ENCODE measurements at regions of chr6 and their contacts with region 1.

Region 1: DNA sequence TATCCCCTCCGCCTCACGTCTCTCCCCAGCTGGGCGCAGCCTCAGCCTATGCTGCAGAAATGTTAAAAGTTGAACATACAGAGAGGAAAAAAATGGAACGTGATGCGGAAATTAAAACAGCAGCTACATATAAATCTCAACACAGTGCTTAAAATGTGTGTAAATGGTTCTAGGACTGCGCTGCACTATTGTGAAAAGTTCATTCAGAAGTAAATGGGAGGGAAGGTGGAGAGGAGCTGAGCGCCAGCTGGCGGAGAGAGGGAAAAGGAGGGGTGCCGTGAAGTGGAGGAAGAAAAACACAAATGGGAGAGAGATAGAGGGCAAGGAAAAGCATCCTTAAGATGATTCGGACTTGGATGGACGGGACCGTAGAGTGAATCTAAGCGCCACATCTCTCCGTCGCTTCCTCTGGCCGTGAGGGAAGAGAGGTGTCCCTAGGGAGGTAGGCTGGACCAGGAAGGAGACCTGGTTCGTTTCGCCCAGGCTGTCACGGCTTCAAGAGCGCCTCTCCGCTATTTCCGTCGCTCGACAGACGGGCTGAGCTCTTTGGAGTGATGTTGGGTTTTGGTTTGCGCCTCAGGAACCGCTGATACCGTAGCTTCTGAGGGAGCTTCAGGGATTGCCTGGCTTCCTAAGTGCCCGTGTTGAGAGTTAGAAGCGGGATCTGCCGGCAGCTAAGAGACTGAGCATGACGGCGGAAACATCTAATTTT is 113.7 kb downstream of the TRIM27 start:
- DNase-seq: no peak
- ATAC-seq: no peak
- H3K4me3 ChIP-seq: no peak overlapping the region
- H3K4me3 Mint-ChIP-seq: peak overlapping the region in 6 of 10 donors; percentile 4 to 57 (median 22)
- H3K27ac ChIP-seq: no peak overlapping the region
- H3K27ac Mint-ChIP-seq: peak overlapping the region in 4 of 9 donors; percentile 38 to 70 (median 62)
- H3K4me1 ChIP-seq: no peaks in the 10 kb centered on the region
- H3K4me1 Mint-ChIP-seq: peaks cover 0 to 31% (median 13%) of the 10 kb centered on the region in 7 donors
- H3K27me3 ChIP-seq: peaks cover 33 to 47% of the 10 kb centered on the region in 2 donors
- H3K27me3 Mint-ChIP-seq: peaks cover 87 to 95% (median 92%) of the 10 kb centered on the region in 5 donors

Region 2: DNA sequence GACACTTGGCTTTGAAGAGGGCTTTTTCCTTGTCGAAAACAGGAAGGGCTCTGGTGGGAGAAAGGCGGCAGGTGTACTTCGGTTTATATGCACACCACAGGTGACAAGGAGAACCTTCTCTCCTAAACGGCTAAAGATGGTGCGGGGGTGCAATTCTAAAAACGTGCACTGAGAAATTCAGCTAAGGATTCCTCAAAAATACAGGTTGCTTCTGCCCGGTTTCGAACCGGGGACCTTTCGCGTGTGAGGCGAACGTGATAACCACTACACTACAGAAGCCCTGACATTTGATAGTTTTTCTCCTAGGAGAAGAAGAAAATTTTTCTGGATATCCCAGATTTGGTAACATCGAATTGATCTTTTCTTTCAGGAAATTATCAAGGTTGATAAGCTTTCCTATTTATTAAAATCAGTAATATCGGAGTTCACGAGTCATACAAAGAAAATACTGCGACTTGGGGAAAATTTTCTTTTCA is 1530.0 kb before region 1 on chr6:
- CTCF ChIA-PET with region 1: no interaction called
- POLR2A ChIA-PET with region 1: no interaction called
- intact Hi-C with region 1: no loop called
- DNase-seq: peak in 1 of 9 donors; percentile 13
- ATAC-seq: no peak
- H3K4me3 ChIP-seq: no peak overlapping the region
- H3K4me3 Mint-ChIP-seq: peak overlapping the region in 5 of 10 donors; percentile 28 to 51 (median 44)
- H3K27ac ChIP-seq: no peak overlapping the region
- H3K27ac Mint-ChIP-seq: peak overlapping the region in 5 of 9 donors; percentile 59 to 83 (median 77)
- H3K4me1 ChIP-seq: no peaks in the 10 kb centered on the region
- H3K4me1 Mint-ChIP-seq: peaks cover 0 to 19% (median 4%) of the 10 kb centered on the region in 7 donors
- H3K27me3 ChIP-seq: peaks cover 32 to 52% of the 10 kb centered on the region in 2 donors
- H3K27me3 Mint-ChIP-seq: peaks cover 74 to 88% (median 86%) of the 10 kb centered on the region in 5 donors

Region 3: DNA sequence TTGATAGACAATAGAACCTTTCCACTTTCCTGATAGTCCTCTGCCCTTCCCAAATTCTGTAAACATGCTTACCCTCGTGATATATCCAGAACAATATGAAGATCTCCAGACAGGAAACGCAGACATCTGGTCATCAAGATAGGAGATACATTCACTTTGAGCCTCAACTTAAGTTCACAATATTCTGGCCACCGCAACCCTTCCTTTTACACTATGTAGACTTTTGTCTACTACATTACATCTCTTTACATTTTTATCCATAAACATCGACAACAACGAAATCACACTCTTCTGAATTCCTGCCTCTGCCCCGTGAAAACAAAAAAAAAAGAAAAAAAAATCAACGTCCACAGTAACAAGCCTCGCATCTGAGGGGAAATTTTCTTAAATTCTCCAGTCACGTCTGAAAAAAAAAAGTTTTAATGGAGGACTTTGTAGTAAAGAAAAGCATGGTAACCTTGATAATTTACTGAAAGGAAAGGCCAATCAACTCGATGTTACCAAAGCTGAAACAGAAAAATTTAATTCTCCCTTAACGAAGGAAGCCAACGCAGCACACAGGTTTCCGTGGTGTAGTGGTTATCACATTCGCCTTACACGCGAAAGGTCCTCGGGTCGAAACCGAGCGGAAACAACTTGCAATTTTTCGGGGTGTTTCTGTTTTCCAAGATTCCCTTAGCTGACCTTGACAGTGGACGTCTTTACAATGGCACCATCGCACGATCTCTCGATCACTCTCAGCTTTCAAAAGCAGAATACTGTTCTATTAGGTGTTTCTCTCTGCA is 1519.8 kb before region 1 on chr6:
- CTCF ChIA-PET with region 1: no interaction called
- POLR2A ChIA-PET with region 1: no interaction called
- intact Hi-C with region 1: loop called (anchors 2 to 10 kb)
- DNase-seq: no peak
- ATAC-seq: no peak
- H3K4me3 ChIP-seq: no peak overlapping the region
- H3K4me3 Mint-ChIP-seq: peak overlapping the region in 4 of 10 donors; percentile 5 to 64 (median 10)
- H3K27ac ChIP-seq: no peak overlapping the region
- H3K27ac Mint-ChIP-seq: peak overlapping the region in 6 of 9 donors; percentile 18 to 67 (median 29)
- H3K4me1 ChIP-seq: no peaks in the 10 kb centered on the region
- H3K4me1 Mint-ChIP-seq: peaks cover 0 to 4% (median 0%) of the 10 kb centered on the region in 7 donors
- H3K27me3 ChIP-seq: peaks cover 37 to 70% of the 10 kb centered on the region in 2 donors
- H3K27me3 Mint-ChIP-seq: peaks cover 86 to 95% (median 90%) of the 10 kb centered on the region in 5 donors

Region 4: GRCh38 chr6:28695715-28696114 is 114.4 kb before region 1 on chr6:
- CTCF ChIA-PET with region 1: no interaction called
- POLR2A ChIA-PET with region 1: no interaction called
- intact Hi-C with region 1: loop called in 1 of 2 experiments (anchors 5 kb)
- DNase-seq: no peak
- ATAC-seq: no peak
- H3K4me3 ChIP-seq: no peak overlapping the region
- H3K4me3 Mint-ChIP-seq: peak overlapping the region in 5 of 10 donors; percentile 5 to 67 (median 39)
- H3K27ac ChIP-seq: no peak overlapping the region
- H3K27ac Mint-ChIP-seq: peak overlapping the region in 1 of 9 donors; percentile 13
- H3K4me1 ChIP-seq: no peaks in the 10 kb centered on the region
- H3K4me1 Mint-ChIP-seq: peaks cover 6 to 32% (median 24%) of the 10 kb centered on the region in 7 donors
- H3K27me3 ChIP-seq: peaks cover 11 to 19% of the 10 kb centered on the region in 2 donors
- H3K27me3 Mint-ChIP-seq: peaks cover 86 to 95% (median 93%) of the 10 kb centered on the region in 5 donors

Region 5: GRCh38 chr6:28719275-28719940 is 90.7 kb before region 1 on chr6:
- CTCF ChIA-PET with region 1: no interaction called
- POLR2A ChIA-PET with region 1: no interaction called
- intact Hi-C with region 1: no loop called
- DNase-seq: no peak
- ATAC-seq: no peak
- H3K4me3 ChIP-seq: no peak overlapping the region
- H3K4me3 Mint-ChIP-seq: no peak overlapping the region
- H3K27ac ChIP-seq: no peak overlapping the region
- H3K27ac Mint-ChIP-seq: no peak overlapping the region
- H3K4me1 ChIP-seq: no peaks in the 10 kb centered on the region
- H3K4me1 Mint-ChIP-seq: no peaks in the 10 kb centered on the region
- H3K27me3 ChIP-seq: no peaks in the 10 kb centered on the region
- H3K27me3 Mint-ChIP-seq: peaks cover 44 to 89% (median 82%) of the 10 kb centered on the region in 5 donors

Region 6: DNA sequence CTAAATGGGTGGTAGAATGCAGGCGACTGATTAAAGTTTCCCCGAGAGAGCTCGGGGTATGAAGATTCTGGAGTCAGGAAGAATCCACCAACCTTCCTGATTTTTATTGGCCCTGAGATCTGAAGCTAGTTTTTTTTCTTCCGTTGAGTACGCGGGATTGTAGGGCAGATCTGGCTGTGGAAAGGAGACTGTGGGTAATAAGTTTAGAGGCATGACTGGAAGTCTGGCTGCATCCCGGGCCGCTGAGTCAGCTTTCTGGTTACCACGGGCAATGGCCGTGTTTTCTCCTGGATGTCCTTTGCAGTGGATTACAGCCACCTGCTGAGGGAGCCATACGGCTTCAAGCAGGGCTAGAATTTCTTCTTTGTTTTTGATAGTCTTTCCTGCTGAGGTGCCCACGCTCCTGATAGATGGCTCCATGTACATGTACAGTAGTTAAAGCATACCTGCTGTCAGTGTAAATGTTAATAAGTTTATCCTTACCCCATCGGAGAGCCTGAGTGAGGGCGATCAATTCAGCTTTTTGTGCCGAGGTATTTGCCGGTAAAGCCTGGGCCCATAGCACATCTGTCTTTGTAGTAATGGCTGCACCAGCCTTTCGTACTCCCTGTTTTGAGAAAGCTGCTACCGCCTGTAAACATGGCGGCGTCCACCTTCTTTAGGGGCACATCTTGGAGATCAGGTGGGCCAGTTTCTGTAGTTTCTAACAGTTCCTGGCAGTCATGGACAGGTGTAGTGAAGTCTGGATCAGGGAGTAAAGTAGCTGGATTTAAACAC is 40.3 kb before region 1 on chr6:
- CTCF ChIA-PET with region 1: no interaction called
- POLR2A ChIA-PET with region 1: no interaction called
- intact Hi-C with region 1: loop called (anchors 5 kb)
- DNase-seq: no peak
- ATAC-seq: no peak
- H3K4me3 ChIP-seq: no peak overlapping the region
- H3K4me3 Mint-ChIP-seq: no peak overlapping the region
- H3K27ac ChIP-seq: no peak overlapping the region
- H3K27ac Mint-ChIP-seq: peak overlapping the region in 1 of 9 donors; percentile 33
- H3K4me1 ChIP-seq: no peaks in the 10 kb centered on the region
- H3K4me1 Mint-ChIP-seq: peaks cover 6 to 17% (median 10%) of the 10 kb centered on the region in 7 donors
- H3K27me3 ChIP-seq: peaks cover 18 to 71% of the 10 kb centered on the region in 2 donors
- H3K27me3 Mint-ChIP-seq: peaks cover 93 to 96% (median 95%) of the 10 kb centered on the region in 5 donors

Region 7: DNA sequence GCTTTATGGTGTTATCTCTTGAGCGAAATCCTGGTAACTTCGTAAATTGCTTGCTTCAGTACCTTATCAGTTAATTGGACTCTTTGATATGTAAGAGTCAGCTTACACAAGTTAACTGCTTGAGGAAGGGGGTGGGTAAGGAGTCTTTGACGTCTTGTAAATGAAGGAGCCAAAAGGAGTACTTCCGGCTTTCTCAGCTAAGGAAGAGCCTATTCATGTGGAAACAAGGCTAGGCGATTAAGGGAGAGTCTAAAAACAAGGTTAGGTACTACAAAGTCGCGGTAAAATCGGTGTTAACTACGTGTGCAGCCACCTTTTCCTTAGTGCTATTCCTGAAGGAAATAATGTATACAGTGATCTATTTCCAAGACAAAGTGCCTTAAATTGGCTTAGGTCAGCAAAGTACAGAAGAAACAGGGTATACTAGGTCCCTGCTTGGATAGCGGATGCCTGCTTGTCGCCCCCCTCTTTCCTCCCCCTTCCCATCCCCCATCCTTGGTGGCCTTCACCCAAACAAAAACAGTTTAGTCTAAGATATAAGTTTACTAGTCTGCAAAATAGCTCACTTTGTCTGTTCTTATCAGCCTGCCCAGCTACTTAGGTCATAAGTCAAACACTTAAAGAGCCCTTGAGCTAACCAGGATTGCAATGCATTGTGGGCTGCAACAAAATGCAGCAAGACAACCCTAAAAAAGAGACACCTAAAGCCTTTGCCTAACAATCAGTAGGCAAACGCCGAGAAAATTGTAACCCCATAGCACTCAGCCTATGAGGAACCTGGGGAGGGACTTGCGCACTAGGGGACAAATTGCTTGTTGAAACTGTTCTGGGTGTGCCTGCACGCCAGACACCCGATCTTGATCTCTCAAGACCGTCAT is 33.6 kb before region 1 on chr6:
- CTCF ChIA-PET with region 1: no interaction called
- POLR2A ChIA-PET with region 1: no interaction called
- intact Hi-C with region 1: loop called (anchors 5 kb)
- DNase-seq: no peak
- ATAC-seq: no peak
- H3K4me3 ChIP-seq: no peak overlapping the region
- H3K4me3 Mint-ChIP-seq: peak overlapping the region in 2 of 10 donors; percentile 33 to 48
- H3K27ac ChIP-seq: no peak overlapping the region
- H3K27ac Mint-ChIP-seq: peak overlapping the region in 4 of 9 donors; percentile 1 to 67 (median 47)
- H3K4me1 ChIP-seq: no peaks in the 10 kb centered on the region
- H3K4me1 Mint-ChIP-seq: peaks cover 10 to 22% (median 18%) of the 10 kb centered on the region in 7 donors
- H3K27me3 ChIP-seq: peaks cover 26 to 82% of the 10 kb centered on the region in 2 donors
- H3K27me3 Mint-ChIP-seq: peaks cover 93 to 99% (median 97%) of the 10 kb centered on the region in 5 donors

Measured in naive thymus-derived CD4-positive, alpha-beta T cell (primary cell).